Gastrocnemius medialis (tissue), 4 donors: ENCODE measurements at regions of chr7 and their contacts with region 1.

Region 1: DNA sequence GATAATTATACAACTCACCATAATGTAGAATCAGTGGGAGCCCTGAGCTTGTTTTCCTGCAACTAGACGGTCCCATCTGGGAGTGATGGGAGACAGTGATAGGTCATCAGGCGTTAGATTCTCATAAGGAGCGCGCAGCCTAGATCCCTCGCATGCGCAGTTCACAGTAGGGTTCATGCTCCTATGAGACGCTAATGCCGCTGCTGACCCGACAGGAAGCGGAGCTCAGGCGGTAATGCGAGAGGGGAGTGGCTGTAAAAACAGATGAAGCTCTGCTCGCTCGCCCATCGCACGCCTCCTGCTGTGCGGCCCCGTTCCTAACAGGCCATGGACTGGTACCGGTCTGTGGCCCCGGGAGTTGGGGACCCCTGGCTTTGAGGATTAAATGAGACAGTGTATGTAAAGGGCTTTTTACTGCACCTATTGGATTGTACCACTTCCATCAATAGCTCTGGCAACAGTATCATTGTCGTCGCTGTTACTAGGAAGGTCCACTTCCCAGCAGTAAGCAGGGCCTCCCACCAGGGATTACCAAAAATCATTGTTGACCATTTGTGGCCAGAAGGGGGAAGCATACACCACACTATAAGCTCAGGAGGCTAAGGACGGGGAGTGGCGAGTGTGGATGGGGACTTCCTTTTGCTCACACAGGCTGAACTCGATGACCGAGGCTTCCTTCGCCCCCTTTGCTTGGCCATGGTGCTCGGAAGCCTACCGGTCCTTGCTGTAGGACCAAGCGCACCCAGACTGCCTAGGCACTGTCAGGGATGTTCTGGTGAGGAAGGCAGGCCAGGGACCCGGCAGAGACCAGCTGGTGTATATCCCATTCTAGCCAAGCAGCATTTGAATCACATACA is 26.4 kb downstream of the AKR1B1 start:
- DNase-seq: peak; percentile 67 to 81
- ATAC-seq: peak; percentile 99 to 100
- H3K4me3 ChIP-seq: peak overlapping the region; percentile 40 to 65 (median 54)
- H3K27ac ChIP-seq: peak overlapping the region; percentile 75 to 84 (median 82)
- H3K4me1 ChIP-seq: peaks cover 0 to 4% of the 10 kb centered on the region in 2 donors
- H3K27me3 ChIP-seq: no peaks in the 10 kb centered on the region
- CTCF ChIP-seq: peak; percentile 69 to 89 (median 81)
- POLR2A ChIP-seq: peak in 1 of 2 donors; percentile 56

Region 2: GRCh38 chr7:134502463-134503371 is 70.2 kb after region 1 on chr7:
- in situ Hi-C with region 1: loop called in 2 of 4 experiments (anchors 10 kb)
- intact Hi-C with region 1: no loop called
- DNase-seq: peak; percentile 73 to 74
- ATAC-seq: peak; percentile 94 to 98
- H3K4me3 ChIP-seq: no peak overlapping the region
- H3K27ac ChIP-seq: peak overlapping the region; percentile 40 to 75 (median 54)
- H3K4me1 ChIP-seq: peaks cover 2% of the 10 kb centered on the region in 2 donors
- H3K27me3 ChIP-seq: no peaks in the 10 kb centered on the region
- CTCF ChIP-seq: no peak
- POLR2A ChIP-seq: no peak

Region 3: DNA sequence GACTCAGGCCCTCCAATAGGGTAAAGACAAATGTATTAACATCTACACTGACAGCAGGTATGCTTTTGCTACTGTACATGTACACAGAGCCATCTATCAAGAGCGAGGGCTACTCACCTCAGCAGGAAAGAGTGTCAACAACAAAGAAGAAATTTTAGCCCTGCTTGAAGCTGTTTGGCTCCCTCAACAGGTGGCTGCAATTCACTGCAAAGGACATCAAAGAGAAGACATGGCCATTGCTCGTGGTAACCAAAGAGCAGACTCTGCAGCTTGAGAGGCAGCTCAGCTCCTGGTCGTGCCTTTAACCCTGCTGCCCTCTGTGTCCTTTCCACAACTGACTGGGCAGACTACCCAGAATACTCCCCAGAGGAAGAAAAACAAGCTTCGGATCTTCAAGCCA is 121.5 kb after region 1 on chr7:
- in situ Hi-C with region 1: no loop called
- intact Hi-C with region 1: loop called (anchors 1 kb)
- DNase-seq: no peak
- ATAC-seq: no peak
- H3K4me3 ChIP-seq: no peak overlapping the region
- H3K27ac ChIP-seq: no peak overlapping the region
- H3K4me1 ChIP-seq: peaks cover 7 to 12% of the 10 kb centered on the region in 2 donors
- H3K27me3 ChIP-seq: no peaks in the 10 kb centered on the region
- CTCF ChIP-seq: peak in 1 of 5 experiments; percentile 17
- POLR2A ChIP-seq: no peak

Region 4: DNA sequence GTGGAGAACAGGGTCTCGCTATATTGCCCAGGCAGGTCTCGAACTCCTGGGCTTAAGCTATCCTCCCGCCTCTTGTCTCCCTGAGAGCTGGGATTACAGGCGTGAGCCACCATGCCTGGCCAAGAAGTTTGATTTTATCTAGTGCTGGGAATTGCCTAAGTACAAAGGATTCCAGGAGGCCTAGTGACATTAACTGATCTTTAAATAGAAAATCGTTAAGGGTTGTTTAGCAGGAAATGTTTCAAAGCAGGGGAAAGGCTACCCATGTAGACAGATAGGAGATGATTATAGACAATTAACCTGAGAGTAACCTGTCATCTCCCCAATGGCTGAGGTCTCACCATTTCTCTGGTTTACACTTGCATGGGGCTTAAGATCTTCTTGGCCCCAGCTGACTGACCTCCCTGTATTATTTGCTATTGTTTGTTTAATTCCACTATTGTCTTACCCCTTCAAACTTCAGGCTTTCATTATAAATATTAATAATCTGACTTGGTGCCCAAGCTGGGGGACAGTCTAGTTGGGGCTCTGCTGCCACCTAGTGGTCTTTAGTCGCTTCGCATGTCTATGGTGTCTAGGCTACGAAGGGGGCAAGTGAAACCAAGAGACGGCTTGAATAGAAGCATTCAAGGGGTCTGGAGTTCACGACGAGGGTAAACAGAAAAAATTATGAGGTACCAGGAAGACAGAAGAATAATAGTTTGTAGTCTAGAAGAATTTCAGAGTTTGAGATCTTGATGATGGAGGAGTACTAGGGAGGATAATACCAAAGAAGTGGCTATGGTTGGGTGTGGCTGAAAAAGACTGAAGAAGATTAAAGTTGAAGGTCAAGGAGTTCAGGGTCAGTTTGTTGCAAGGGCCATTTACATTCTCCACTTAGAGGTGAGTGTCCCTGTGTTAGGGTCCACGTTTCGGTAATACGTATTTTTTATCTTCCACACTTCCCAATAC is 173.7 kb after region 1 on chr7:
- in situ Hi-C with region 1: loop called (anchors 5 to 10 kb)
- intact Hi-C with region 1: loop called (anchors 1 kb)
- DNase-seq: peak; percentile 34 to 38
- ATAC-seq: peak; percentile 89 to 90
- H3K4me3 ChIP-seq: peak overlapping the region in 2 of 4 donors; percentile 12 to 27
- H3K27ac ChIP-seq: no peak overlapping the region
- H3K4me1 ChIP-seq: no peaks in the 10 kb centered on the region
- H3K27me3 ChIP-seq: no peaks in the 10 kb centered on the region
- CTCF ChIP-seq: peak; percentile 81 to 98 (median 89)
- POLR2A ChIP-seq: no peak

Region 5: DNA sequence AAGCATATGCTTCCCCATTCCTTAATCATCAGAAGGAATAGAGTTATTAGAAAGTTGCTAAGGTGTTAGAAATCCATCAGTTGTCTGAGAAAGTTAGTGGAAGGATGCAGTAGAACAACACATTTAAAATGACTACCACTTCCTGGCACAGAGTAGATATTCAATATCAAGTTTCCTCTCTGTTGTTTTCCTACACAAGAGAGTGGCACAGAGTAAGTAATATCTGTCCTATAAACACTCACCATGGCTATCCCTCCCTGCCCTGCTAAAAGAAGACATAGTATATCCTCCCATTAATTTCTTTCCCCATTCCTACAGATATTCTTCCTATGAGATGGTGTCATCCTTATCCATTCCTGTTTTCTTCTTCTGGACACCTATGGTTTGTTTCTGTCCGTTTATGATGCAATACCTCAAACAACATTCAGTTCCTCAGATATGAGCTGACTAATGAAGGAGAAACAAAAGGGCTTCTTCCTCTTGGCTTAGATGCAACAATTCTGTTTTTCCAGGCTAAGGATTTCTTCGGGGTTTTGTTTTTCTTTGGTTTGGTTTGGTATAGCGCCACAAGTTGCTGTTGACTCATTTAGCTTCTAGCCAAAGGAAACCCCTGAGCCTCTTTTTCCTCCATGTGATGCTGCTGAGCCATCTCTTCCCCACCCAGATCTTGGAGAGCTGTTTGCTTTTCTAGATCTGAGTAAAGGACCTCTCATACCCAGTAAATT is 181.3 kb after region 1 on chr7:
- in situ Hi-C with region 1: loop called in 3 of 4 experiments (anchors 5 to 10 kb)
- intact Hi-C with region 1: no loop called
- DNase-seq: peak in 1 of 2 donors; percentile 18
- ATAC-seq: peak; percentile 66 to 77
- H3K4me3 ChIP-seq: no peak overlapping the region
- H3K27ac ChIP-seq: peak overlapping the region in 3 of 4 donors; percentile 7 to 44 (median 41)
- H3K4me1 ChIP-seq: no peaks in the 10 kb centered on the region
- H3K27me3 ChIP-seq: no peaks in the 10 kb centered on the region
- CTCF ChIP-seq: no peak
- POLR2A ChIP-seq: no peak